ENCODE measurements at regions of chr9 and their contacts with region 1.

Region 1: DNA sequence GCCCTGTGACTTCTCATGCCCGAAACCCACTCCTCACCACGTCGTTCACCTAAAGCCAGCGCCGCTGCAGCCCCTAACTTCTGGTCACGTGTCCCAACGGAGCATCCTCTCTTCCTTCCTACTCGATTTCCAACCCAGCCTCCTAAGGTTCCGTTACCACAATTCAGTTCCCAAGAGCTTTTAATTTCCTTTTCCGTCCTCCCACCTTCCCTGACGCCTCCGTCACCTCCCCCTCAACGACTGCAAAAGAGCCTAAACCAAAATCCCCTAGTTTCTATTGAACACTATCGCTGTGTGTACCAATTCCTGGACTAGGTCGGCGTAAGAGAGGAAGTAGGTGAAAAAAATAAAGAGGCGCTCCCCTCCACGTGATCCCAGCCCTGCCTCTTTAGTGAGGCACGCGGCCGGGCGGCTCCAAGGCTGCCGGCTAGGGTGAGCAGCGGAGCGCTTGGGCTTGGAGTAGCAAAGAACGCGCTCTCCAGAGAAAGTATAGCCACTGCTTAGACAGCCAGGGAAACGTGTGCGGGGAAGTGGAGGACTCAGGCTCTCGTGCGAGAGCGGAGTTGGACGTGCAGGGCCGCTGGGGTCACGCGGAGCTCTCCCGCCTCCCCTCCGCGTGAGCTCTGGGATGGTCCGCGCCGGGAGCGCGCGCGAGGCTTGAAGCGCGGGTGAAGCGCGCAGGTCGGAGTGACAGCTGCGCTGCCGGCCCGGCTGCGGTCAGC is at the starts of genes CENPP and NOL8:
- DNase-seq: peak; percentile 70 to 92 (median 87)
- H3K4me3 ChIP-seq: peak within 1 kb of the TSS; percentile 63 to 98 (median 89)
- H3K27ac ChIP-seq: peak within 1 kb of the TSS; percentile 90 to 100 (median 98)
- H3K27me3 ChIP-seq: no peaks in the 10 kb centered on the region
- CTCF ChIP-seq: peak in 16 of 56 donors; percentile 1 to 51 (median 20)
- total RNA-seq, gene CENPP: 1.7 to 16.5 (median 7.0) TPM
- total RNA-seq, gene NOL8: 18.8 to 50.5 (median 32.6) TPM

Region 2: DNA sequence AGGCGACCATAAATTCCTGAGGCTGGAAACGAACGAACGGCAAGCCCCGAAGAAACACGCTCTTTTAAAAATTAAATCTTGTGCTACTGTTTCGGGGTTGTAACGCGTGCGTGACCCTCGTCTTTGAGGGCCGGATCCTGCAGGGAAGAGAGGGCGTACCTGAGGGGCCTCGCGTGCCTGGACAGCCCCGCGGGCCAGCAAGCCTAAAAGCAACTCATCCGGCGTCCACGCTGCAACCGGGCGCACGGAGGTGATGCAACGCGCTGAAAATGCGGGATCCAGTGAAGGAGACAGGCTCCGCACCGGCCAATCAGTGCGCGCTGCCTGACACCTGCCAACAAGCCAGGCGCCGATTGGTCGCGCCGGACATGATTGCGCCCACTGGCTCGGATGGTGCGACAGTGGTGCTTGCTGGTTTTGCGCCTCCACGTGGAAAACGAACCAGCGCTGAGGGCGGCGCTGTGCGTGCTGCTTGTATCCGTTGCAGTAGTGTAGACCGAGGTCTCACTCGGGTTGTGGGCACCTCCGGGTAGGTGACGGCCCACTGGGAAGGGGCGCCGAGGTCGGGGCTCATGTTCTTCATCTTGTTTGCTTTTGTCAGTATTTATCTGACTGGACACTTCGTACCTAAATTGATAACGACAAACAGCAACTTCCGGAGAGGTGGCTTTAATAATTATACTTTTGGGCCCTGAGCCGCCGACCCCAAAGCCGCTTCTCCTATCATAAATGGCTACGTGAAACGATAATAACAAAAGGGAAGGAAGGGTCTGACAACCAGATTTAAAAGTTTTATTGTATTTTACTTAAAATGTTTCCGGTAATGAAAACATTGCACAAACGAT is 31.8 kb before region 1 on chr9 and contains the start of gene IARS1:
- intact Hi-C with region 1: loop called (anchors 1 to 5 kb)
- DNase-seq: peak; percentile 96 to 100 (median 99)
- H3K4me3 ChIP-seq: peak within 1 kb of the TSS; percentile 58 to 99 (median 85)
- H3K27ac ChIP-seq: peak within 1 kb of the TSS in 51 of 59 donors; percentile 26 to 83 (median 63)
- H3K27me3 ChIP-seq: no peaks in the 10 kb centered on the region
- CTCF ChIP-seq: peak in 55 of 56 donors; percentile 14 to 84 (median 66)
- total RNA-seq, gene IARS1: 50.3 to 131 (median 98.3) TPM

Region 3: DNA sequence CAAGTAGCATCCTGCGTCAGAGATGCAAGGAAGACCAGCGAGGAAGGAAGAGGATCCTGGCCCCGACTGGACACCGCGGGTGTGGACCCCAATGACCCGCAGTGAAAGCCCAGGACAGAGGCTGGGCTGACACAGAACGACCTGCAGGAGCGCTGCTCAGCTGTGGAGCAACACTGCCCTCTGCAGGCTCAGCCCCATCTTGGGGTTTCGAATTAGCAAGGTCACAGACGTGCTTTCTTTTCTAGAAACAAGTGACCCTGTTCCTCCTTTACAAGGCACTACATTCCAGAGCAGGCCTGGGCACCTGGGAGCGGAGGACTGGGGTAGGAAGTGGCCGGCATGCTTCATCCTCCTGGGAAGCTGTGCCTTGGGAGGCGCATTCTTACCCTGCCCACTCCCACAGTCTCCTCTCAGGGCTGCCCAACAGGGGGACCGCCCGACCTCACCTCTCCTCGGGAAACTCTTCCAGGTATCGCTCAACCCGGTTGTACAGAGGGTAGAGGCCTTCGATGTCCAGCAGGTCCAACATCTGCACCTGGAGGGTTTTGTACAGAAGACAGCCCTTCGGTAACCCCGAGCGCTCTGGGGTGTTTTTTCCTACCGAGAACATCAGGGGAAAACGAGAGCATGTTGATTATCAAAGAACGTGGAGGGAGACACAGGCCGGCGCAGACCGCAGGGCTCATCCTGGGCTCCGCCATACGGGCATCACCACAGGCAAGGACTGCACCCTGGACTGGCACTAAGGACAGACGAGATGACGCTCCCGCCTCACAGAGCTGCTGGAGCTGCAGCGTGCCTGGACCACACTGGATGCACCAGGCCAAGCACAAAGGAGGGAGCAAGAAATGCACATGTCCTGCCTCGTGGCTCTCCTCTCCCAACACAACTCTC is 309.5 kb after region 1 on chr9:
- intact Hi-C with region 1: loop called in 1 of 2 experiments (anchors 10 kb)
- DNase-seq: peak; percentile 60 to 84 (median 72)
- H3K4me3 ChIP-seq: no peak overlapping the region
- H3K27ac ChIP-seq: peak overlapping the region in 22 of 59 donors; percentile 1 to 63 (median 40)
- H3K27me3 ChIP-seq: no peaks in the 10 kb centered on the region
- CTCF ChIP-seq: peak; percentile 71 to 98 (median 92)

Region 4: DNA sequence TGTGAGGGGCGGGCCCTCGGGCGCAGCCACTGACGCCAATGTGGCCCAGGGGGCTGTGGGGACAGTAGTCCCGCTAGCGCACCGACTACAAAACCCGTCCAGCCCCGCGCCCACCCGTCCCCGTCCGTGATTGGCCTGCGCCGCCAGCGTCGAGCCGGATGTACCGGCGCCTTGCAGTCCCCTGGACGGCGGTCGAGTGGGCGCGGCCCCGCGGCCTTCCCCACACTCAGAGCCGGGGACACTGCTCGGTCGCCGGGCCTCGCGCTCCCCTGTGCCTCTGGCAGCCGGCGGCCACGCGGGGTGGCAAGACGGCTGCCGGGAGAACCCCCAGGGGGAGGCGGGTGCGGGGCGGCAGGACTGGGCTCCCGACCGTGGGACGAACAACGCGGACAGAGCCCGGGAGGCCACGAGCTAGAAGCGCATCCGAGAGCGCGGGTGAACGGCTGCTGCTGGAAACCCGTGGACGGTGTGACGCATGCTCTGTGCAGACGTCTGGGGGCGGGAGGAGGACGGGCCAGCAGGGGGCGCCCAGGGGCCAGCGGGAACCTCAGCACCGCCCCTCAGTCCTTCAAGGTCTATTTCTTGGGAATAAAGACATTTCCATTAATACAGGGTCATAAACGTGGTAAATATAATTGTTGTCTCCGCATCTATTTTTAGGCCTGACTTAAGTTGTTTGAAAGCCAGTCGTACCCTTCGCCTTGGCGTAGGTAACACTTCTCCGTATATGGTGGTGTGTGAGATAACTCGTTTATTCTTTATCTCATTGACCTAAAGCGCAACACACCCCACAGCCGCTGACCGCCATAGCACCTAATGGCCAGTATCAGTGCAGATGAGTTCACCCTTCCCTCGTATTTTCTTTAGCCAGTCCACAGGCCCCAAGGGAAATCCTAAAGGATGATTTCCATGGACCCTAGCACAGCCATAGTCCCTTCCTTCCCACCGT is 439.8 kb after region 1 on chr9:
- intact Hi-C with region 1: loop called in 1 of 2 experiments (anchors 10 kb)
- DNase-seq: peak; percentile 97 to 100 (median 99)
- H3K4me3 ChIP-seq: peak overlapping the region; percentile 45 to 99 (median 91)
- H3K27ac ChIP-seq: peak overlapping the region; percentile 81 to 100 (median 98)
- H3K27me3 ChIP-seq: no peaks in the 10 kb centered on the region
- CTCF ChIP-seq: peak; percentile 77 to 99 (median 93)

Measured in dorsolateral prefrontal cortex (tissue), 120 donors.